Posterior cingulate gyrus (tissue), 11 donors: ENCODE measurements at regions of chr5 and their contacts with region 1.

Region 1: GRCh38 chr5:135191084-135191826 is 157.2 kb upstream of the PITX1 start:
- DNase-seq: peak; percentile 41 to 95 (median 66)

Region 2: DNA sequence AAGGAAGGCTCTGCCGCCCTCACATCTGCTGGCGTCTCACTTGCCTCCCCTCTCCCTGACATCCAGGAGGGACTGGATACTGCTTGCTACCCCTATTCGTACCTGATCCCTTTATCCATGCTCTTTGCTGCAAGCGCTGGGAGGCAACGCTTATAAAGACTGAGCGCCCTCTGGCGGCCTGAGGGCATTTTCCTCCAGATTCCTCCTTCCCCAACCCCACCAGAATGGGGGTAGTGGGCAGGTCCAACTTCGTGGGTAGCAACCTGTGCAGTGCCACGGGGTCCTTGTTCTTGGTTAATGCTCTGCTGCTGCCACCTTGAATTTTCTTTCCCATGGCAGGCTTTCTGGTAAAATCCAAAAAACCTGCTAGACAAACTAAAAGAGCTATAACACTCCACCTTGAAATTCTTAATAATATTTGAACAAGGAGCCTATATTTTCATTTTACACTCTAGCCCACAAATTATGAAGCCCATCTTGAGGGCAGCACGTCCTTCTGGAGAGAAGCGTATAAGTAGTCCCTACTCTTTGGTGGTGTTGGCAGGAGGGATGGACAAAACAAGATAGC is 613.4 kb before region 1 on chr5:
- intact Hi-C with region 1: no loop called
- DNase-seq: peak; percentile 58 to 96 (median 83)

Region 3: DNA sequence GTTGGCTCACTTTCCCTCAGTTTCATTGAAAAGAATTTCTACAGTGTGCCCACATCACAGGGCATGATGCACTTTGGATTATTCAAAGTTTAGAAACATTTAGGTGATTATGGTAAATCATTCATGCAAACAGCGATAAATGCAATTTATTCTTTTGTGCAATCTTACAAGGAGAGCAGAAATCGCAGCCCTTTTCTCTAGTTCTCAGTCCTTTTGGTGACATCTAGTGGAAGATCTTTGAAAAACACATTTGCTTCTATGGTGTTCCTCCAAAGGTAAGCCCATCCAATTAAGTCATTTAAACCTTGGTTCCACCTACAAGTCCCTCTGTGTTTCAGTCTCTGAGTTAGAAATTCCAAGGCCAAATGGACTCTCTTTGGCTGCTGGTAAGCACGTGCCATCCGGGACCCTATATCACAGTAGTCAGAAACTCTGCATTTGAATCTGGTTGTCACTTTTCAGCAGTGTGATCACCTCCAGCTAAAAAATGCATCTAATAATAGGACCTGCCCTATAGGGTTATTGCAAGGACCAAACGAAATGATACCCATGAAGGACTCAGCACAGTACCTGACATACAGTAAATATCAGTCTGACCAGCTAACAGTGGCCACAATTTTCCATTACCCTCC is 141.4 kb after region 1 on chr5:
- intact Hi-C with region 1: loop called (anchors 10 kb)
- DNase-seq: no peak

Region 4: DNA sequence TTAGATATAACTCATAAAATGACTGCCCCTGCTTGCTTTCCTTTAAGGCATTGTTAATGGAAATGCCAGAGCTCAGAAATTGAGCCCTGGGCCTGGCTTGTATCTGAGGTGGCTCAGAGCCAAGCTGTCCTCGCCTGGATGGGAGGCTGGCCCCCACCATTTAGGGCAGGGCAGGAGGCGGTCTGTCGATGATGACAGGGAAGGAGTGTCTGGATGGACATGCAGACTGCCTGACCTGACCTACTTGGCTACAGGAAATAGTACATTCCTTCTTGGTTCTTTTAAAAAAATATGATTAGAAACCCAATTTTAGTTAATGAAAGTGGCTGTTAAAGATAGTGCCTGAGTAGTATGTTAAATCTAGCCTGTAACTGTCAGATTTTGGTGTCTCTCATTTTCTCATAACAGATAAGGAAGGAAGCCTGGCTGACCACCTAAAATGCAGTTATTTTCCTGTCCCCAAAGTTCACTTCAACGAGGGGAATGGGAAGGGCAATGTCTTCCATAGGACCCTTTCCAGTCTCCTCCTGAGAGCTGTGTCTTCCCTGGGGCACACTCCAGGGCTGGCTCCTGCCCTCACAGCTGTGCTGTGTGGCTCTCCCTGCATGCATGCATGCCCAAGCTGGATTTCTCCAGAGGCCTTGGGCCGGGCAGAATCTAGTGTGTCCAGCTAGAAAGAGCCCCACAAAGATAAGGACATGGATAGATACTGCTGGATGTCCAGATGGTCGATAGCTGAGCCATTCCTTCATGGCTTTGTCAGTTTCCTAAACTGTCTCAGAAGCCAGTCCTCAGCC is 165.5 kb after region 1 on chr5:
- intact Hi-C with region 1: no loop called
- DNase-seq: no peak